PC-3 (cell line): ENCODE measurements at regions of chr12 and their contacts with region 1.

Region 1: DNA sequence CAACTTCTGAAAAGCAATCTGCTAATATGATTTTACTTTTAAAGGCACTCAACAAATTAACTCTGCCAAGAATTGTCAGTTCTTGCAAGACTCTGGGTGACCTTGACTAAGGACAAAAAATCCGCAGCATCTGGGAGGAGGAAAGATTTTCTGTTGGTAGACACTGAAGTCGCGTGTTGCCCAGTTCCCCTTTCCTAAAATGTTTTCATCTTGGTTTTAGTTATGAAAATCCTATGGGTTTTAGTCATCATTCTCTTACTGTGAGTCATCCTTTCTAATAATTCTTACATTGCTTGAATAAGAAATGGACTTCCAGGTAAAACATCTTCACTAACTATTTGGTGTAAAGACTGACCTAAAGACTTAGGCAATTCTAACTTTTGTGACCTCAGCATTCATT is 9.1 kb downstream of the GSG1 start:
- DNase-seq: peak; percentile 71
- ATAC-seq: 0 out of 2 replicates have a peak, but pooled peaks have one; percentile 2
- H3K4me3 ChIP-seq: peak overlapping the region; percentile 13; the same call in 1 of the 2 replicates
- H3K27ac ChIP-seq: peak overlapping the region; percentile 63
- H3K4me1 ChIP-seq: peaks cover 56% of the 10 kb centered on the region
- H3K27me3 ChIP-seq: no peaks in the 10 kb centered on the region
- CTCF ChIP-seq: no peak

Region 2: GRCh38 chr12:12916135-12916944 is 178.0 kb before region 1 on chr12:
- CTCF ChIA-PET with region 1: no interaction called
- POLR2A ChIA-PET with region 1: no interaction called
- intact Hi-C with region 1: loop called (anchors 5 kb)
- DNase-seq: peak; percentile 81
- ATAC-seq: peak; percentile 64
- H3K4me3 ChIP-seq: no peak overlapping the region
- H3K27ac ChIP-seq: no peak overlapping the region
- H3K4me1 ChIP-seq: peaks cover 22% of the 10 kb centered on the region; the same call in 1 of the 2 replicates
- H3K27me3 ChIP-seq: no peaks in the 10 kb centered on the region
- CTCF ChIP-seq: peak; percentile 86

Region 3: GRCh38 chr12:13044002-13044905 is 50.1 kb before region 1 on chr12 and contains the start of gene FAM234B:
- CTCF ChIA-PET with region 1: no interaction called
- POLR2A ChIA-PET with region 1: no interaction called
- intact Hi-C with region 1: loop called (anchors 10 kb)
- DNase-seq: peak; percentile 60
- ATAC-seq: peak; percentile 96
- H3K4me3 ChIP-seq: peak within 1 kb of the TSS; percentile 97
- H3K27ac ChIP-seq: no peak within 1 kb of the TSS
- H3K4me1 ChIP-seq: 0 out of 2 replicates have a peak, but pooled peaks cover 4% of the 10 kb centered on the region
- H3K27me3 ChIP-seq: no peaks in the 10 kb centered on the region
- CTCF ChIP-seq: peak; percentile 29; the same call in 1 of the 2 replicates
- total RNA-seq, gene FAM234B: 3.1 and 3.3 TPM in 2 replicates

Region 4: GRCh38 chr12:13205809-13206559 is 111.6 kb after region 1 on chr12:
- CTCF ChIA-PET with region 1: interaction called, 3 read pairs
- POLR2A ChIA-PET with region 1: interaction called, 7 read pairs
- intact Hi-C with region 1: loop called (anchors 1 kb)
- DNase-seq: peak; percentile 98
- ATAC-seq: peak; percentile 76
- H3K4me3 ChIP-seq: no peak overlapping the region
- H3K27ac ChIP-seq: peak overlapping the region; percentile 91
- H3K4me1 ChIP-seq: peaks cover 75% of the 10 kb centered on the region
- H3K27me3 ChIP-seq: no peaks in the 10 kb centered on the region
- CTCF ChIP-seq: no peak